Mammary epithelial cell (primary cell): ENCODE measurements at regions of chr5 and their contacts with region 1.

Region 1: DNA sequence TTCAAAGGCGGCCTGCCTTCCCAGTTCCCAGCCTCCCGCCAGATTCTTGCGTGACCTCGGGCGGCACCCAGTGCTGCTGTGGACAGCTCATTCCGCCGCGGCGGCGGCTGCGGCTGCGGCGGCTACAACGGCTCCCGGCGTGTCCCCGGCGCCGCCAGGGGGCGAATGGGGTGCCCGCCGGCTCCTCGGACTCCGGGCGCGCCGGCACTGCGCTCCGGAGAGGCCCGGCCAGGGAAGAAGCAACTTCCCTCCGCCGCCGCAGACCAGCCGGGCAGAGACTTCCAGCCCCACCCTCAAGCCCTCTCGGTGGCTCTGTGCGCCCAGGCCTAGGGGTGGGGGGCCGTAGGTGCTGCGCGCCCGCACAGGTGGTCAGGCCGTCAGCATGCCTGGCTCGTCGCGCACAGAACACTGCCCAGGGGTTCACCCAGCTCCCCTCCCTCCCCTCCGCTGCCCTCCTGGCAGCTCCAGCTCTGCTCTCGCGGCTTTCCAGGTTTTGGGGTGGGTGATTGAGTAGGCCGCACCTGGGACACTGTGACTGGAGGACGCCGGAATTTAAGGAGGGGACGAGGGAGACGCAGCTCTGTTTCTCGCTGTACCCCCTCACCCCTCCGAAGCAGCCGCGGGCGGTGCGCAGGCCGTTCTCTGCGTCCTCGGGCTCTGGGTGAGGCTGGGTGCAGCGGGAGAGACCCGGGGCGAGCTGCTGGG is 20.2 kb downstream of the IGIP start:
- DNase-seq: peak; percentile 44
- H3K4me3 ChIP-seq: no peak overlapping the region
- H3K27ac ChIP-seq: no peak overlapping the region
- H3K4me1 ChIP-seq: no peaks in the 10 kb centered on the region
- H3K27me3 ChIP-seq: no peaks in the 10 kb centered on the region
- CTCF ChIP-seq: no peak

Region 2: DNA sequence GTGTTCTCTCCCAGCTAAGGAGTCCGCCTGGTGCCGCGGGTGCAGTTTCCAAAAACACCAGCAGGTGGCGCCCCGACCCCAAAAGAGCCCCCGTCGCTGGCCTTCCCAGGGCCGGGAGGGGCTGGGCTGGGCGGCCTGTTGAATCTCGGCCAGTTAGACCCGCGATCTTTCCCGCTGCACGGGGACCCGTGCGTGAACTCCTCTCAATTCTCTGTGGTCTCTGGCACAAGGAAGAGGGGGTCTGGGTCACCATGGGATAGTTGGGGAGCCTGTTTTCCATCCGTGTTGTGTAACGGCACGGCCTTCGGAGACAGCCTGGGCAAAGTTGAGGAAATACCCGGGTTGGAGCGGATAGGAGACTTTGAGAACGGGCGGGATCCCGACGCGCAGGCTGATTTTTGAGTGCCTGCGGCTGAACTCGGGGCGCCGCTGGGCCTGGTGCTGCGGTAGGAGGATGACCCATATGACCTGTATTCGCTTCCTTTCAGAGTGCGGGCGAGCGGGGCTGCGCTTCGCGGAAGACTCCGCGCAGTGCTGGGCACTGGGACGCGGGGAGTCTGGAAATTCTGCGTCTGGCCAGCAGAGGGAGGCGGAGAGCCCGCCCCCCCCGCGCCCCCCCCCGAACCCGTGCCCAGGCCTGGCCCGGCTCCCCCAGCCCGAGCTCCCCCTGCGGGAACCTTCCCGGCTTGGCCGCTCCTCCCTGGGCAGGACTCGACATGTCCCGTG is 358.2 kb before region 1 on chr5:
- CTCF ChIA-PET with region 1: no interaction called
- dilution Hi-C with region 1: no loop called
- in situ Hi-C with region 1: loop called (anchors 25 kb)
- intact Hi-C with region 1: loop called (anchors 5 kb)
- DNase-seq: peak; percentile 69
- H3K4me3 ChIP-seq: peak overlapping the region; percentile 50 to 79 (median 60)
- H3K27ac ChIP-seq: peak overlapping the region; percentile 34
- H3K4me1 ChIP-seq: peaks cover 8% of the 10 kb centered on the region
- H3K27me3 ChIP-seq: no peaks in the 10 kb centered on the region
- CTCF ChIP-seq: peak; percentile 65 to 95

Region 3: DNA sequence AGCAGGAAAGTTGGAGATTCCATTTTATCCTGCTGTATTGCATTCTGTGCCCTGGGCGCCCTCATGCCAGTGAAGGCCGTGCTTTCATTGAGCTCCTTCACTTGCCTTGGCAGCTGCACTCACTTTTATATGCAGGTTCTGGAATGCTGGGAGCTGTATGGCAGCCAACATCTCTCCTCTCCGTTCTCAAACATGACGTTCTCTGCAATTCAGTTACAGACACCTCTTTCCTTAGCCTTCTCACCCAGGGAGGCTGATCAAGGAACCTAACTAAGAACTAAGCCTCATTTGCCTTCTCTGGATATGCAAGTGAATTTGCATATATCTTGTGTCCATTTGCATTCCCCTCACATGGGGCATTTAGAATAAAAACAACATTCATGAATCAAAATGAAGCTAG is 61.4 kb before region 1 on chr5:
- CTCF ChIA-PET with region 1: no interaction called
- dilution Hi-C with region 1: no loop called
- in situ Hi-C with region 1: loop called in 1 of 2 experiments (anchors 5 kb)
- intact Hi-C with region 1: no loop called
- DNase-seq: no peak
- H3K4me3 ChIP-seq: no peak overlapping the region
- H3K27ac ChIP-seq: no peak overlapping the region
- H3K4me1 ChIP-seq: no peaks in the 10 kb centered on the region
- H3K27me3 ChIP-seq: peaks cover 5% of the 10 kb centered on the region
- CTCF ChIP-seq: no peak

Region 4: DNA sequence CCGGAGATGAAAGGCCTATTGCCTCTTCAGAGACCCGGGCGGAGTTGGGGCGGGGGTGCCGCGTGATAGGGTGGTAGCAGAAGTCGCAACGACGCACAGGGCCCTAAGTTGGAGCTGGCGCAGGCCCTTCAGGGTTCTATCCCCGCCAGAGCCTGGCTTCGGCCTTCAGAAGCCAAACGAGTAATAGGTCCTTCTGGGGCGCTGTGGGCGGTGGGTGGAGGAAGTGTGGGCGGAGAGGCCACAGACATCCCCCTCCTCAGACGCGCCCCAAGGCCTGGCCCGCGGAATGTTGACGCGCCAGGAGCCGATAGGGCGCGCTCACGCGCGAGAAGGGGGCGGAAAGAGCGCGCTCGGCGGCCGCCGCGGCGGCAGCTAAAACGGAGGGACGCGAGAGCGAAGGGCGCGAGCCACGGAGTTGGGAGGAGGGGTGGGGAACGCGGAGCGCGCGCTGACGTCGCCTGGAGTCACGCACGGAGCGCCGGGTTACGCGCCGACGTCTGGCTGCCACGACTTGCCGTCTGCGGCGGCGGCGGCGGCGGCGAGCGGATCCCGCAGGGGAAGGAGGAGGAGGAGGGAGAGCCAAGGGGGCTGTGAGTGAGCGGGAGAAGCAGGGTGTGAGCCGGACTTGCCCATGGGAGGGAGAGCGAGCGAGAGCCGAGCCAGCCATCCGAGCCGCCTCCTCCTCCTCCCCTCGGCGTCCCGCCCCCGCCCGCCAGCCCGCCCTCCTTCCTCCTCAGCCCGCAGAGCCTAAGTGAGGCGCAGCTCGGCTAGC is 38.5 kb before region 1 on chr5:
- CTCF ChIA-PET with region 1: no interaction called
- dilution Hi-C with region 1: no loop called
- in situ Hi-C with region 1: no loop called
- intact Hi-C with region 1: loop called (anchors 5 kb)
- DNase-seq: peak; percentile 92
- H3K4me3 ChIP-seq: peak overlapping the region; percentile 83 to 97 (median 88)
- H3K27ac ChIP-seq: peak overlapping the region; percentile 85
- H3K4me1 ChIP-seq: peaks cover 13% of the 10 kb centered on the region
- H3K27me3 ChIP-seq: no peaks in the 10 kb centered on the region
- CTCF ChIP-seq: peak in 1 of 2 donors; percentile 26

Region 5: DNA sequence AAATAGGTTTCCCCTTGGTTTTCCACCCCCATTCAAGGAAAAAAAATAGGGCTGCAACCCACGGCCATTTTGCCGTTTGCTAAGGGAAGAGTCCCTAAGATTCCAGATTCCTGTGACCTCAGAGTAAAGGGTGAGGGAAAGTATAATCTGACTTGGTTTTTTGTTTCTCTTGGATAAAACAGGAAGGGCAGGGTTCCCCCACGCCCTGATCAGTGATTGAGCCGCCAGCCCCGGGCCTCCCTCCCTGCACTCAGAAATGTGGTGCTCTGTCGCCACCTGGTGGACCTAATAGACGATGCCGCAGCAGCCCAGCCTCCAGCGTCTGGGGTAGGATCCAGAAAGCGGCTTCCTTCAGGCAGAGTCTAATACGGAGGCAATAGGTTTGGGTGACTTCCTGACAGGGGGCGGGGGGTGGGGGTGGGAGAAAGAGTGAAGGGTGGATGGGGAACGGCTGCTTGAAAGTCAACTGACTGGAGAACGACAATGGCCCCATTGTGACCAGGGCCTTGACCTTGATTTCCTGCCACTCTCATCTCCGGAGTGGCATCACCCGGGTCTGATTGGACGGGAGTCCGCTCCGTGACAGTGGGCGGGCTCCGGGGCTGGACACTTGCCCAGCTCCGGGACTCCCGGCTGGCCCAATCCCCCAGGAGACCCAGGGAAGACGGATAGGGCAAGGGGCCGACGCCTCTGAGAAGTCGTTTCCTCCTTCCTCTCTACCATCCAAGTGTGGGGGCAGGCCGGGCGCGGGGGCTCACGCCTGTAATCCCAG is 11.2 kb after region 1 on chr5:
- CTCF ChIA-PET with region 1: interaction called, 5 read pairs
- dilution Hi-C with region 1: no loop called
- in situ Hi-C with region 1: no loop called
- intact Hi-C with region 1: loop called (anchors 1 kb)
- DNase-seq: peak; percentile 66
- H3K4me3 ChIP-seq: peak overlapping the region in 2 of 3 experiments; percentile 23 to 41
- H3K27ac ChIP-seq: peak overlapping the region; percentile 9
- H3K4me1 ChIP-seq: peaks cover 8% of the 10 kb centered on the region
- H3K27me3 ChIP-seq: no peaks in the 10 kb centered on the region
- CTCF ChIP-seq: peak; percentile 73 to 90